ENCODE measurements at regions of chr17 and their contacts with region 1.

Region 1: DNA sequence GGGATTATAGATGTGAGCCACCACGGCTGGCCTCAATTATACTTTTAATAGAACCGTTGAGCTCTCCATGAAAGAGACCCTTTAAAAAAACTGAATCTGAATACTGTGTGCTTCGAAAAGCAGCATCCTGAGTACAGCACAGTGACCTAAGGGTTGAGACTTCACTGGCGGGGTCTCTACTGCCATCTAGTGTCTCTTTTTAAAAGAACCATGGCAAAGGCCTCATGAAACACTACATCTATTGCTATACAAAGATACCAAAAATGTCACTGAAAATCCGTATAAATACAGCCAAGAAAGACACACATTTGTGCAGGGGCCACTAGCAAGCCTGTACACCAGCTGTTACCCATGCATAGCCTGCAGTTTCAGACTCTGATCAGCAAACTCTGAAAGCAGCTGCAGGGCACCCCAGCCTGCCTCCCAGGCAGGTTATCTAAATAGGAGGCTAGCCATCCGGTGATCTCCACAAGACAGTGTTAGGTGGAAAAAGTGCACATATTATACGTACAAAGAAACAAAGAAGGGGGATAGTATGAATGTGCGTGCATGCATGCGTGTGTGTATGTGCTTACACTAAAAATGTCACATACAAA is 35.3 kb downstream of the NPLOC4 start:
- DNase-seq: peak in 1 of 2 donors; percentile 38
- ATAC-seq: peak; percentile 72 to 86 (median 78)
- H3K4me3 ChIP-seq: no peak overlapping the region
- H3K27ac ChIP-seq: no peak overlapping the region
- H3K4me1 ChIP-seq: peaks cover 0 to 20% (median 16%) of the 10 kb centered on the region in 9 donors
- H3K27me3 ChIP-seq: no peaks in the 10 kb centered on the region
- CTCF ChIP-seq: peak; percentile 62 to 91 (median 84)

Region 2: DNA sequence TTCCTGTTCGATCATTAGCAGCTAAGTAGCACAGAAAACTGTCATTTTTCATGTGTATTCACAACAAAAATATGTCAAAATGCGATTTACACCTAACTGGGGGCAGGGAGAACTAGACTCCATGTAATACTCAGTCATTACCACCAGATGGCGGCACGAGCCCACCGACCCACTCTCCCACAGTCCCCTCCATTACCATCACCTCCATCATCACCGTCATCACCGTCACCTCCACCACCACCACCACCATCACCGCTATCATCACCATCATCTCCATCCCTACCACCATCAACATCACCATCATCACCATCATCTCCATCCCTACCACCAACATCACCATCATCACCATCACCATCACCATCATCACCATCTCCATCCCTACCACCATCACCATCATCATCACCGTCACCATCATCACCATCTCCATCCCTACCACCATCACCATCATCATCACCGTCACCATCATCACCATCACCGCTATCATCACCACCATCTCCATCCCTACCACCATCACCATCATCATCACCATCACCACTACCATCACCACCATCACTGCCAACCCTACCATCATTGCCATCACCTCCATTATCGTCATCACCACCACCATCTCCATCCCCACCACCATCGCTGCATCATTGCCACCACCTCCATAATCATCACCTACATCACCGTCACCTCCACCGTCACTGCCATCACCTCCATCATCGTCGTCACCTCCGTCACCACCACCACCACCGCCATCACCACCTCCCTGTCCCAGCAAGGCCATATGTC is 348.1 kb before region 1 on chr17:
- intact Hi-C with region 1: loop called (anchors 1 to 10 kb)
- DNase-seq: peak in 1 of 2 donors; percentile 54
- ATAC-seq: peak in 5 of 8 donors; percentile 35 to 55 (median 46)
- H3K4me3 ChIP-seq: no peak overlapping the region
- H3K27ac ChIP-seq: no peak overlapping the region
- H3K4me1 ChIP-seq: peaks cover 4 to 24% (median 13%) of the 10 kb centered on the region in 9 donors
- H3K27me3 ChIP-seq: no peaks in the 10 kb centered on the region
- CTCF ChIP-seq: peak; percentile 67 to 86 (median 79)

Region 3: GRCh38 chr17:81558941-81559806 is 42.4 kb before region 1 on chr17:
- intact Hi-C with region 1: loop called in 2 of 10 experiments (anchors 2 to 5 kb)
- DNase-seq: peak in 1 of 2 donors; percentile 47
- ATAC-seq: peak; percentile 41 to 76 (median 68)
- H3K4me3 ChIP-seq: no peak overlapping the region
- H3K27ac ChIP-seq: peak overlapping the region in 3 of 10 donors; percentile 15 to 76 (median 34)
- H3K4me1 ChIP-seq: peaks cover 11 to 62% (median 37%) of the 10 kb centered on the region in 9 donors
- H3K27me3 ChIP-seq: no peaks in the 10 kb centered on the region
- CTCF ChIP-seq: peak in 7 of 9 donors; percentile 27 to 55 (median 37)

Region 4: GRCh38 chr17:81566461-81567126 is 35.0 kb before region 1 on chr17:
- intact Hi-C with region 1: loop called in 2 of 10 experiments (anchors 5 kb)
- DNase-seq: peak; percentile 58 to 59
- ATAC-seq: peak; percentile 45 to 78 (median 74)
- H3K4me3 ChIP-seq: peak overlapping the region in 3 of 10 donors; percentile 2 to 23 (median 15)
- H3K27ac ChIP-seq: peak overlapping the region in 9 of 10 donors; percentile 31 to 90 (median 78)
- H3K4me1 ChIP-seq: peaks cover 9 to 48% (median 25%) of the 10 kb centered on the region in 9 donors
- H3K27me3 ChIP-seq: no peaks in the 10 kb centered on the region
- CTCF ChIP-seq: no peak